IMR-90 (cell line): ENCODE measurements at regions of chr4 and their contacts with region 1.

Region 1: DNA sequence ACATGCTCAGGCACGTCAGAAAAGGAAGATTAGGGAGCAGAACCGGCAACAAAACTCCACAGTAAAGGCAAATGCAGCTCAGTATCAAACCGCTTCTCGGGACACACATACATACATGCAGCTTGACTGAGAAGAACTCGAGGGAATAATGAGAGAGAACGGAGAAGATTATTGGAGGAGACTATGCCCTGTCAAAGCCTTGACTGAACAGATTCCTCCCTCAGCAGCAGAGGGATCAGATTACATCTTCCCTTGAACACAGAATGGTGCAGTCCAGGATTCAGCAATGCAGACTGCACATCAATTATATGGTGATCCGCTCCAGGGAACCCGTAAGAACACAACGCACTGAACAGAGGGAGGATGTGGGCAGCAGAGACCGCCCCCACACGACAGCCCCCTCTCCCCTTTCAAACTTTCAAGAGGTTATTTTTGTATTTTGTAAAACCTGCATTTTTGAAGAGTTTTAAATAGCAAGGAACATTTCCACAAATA is 183.2 kb downstream of the FBXW7 start:
- DNase-seq: peak; percentile 97
- ATAC-seq: peak; percentile 99
- H3K4me3 ChIP-seq: peak overlapping the region; percentile 63
- H3K27ac ChIP-seq: peak overlapping the region; percentile 59; the same call in 1 of the 2 replicates
- H3K4me1 ChIP-seq: 0 out of 2 replicates have a peak, but pooled peaks cover 2% of the 10 kb centered on the region
- H3K27me3 ChIP-seq: no peaks in the 10 kb centered on the region
- CTCF ChIP-seq: no peak
- POLR2A ChIP-seq: peak; percentile 70; the same call in 1 of the 2 replicates
- RAD21 ChIP-seq: 0 out of 2 replicates have a peak, but pooled peaks have one; percentile 4

Region 2: GRCh38 chr4:151129801-151130200 is 1222.9 kb before region 1 on chr4:
- CTCF ChIA-PET with region 1: no interaction called
- POLR2A ChIA-PET with region 1: no interaction called
- dilution Hi-C with region 1: no loop called
- in situ Hi-C with region 1: no loop called
- intact Hi-C with region 1: loop called (anchors 10 kb)
- DNase-seq: peak; percentile 17
- ATAC-seq: no peak
- H3K4me3 ChIP-seq: no peak overlapping the region
- H3K27ac ChIP-seq: no peak overlapping the region
- H3K4me1 ChIP-seq: peaks cover 3% of the 10 kb centered on the region; the same call in 1 of the 2 replicates
- H3K27me3 ChIP-seq: no peaks in the 10 kb centered on the region
- CTCF ChIP-seq: no peak
- POLR2A ChIP-seq: no peak
- RAD21 ChIP-seq: no peak

Region 3: DNA sequence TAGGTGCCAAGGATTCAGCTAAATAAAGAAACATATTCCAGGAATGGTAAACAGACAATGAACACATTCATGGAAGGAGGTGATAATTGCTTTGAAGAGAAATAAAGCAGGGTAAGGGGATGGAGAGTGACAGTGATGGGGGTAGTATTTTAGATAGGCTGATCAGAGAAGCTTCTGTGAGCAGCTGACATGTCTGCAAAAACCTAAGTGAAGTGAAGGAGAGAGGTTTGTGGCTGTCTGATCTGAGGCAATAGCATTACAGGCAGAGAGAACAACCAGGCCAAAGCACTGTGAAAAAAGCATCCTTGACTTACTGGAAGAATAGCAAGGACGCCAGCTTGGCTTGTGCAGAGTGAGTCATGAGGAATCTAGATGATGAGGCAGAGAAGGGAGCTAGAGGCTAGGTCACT is 319.9 kb before region 1 on chr4:
- CTCF ChIA-PET with region 1: no interaction called
- POLR2A ChIA-PET with region 1: no interaction called
- dilution Hi-C with region 1: no loop called
- in situ Hi-C with region 1: no loop called
- intact Hi-C with region 1: loop called (anchors 10 kb)
- DNase-seq: peak; percentile 88
- ATAC-seq: peak; percentile 96
- H3K4me3 ChIP-seq: no peak overlapping the region
- H3K27ac ChIP-seq: no peak overlapping the region
- H3K4me1 ChIP-seq: peaks cover 5% of the 10 kb centered on the region; the same call in 1 of the 2 replicates
- H3K27me3 ChIP-seq: no peaks in the 10 kb centered on the region; the same call in 1 of the 2 replicates
- CTCF ChIP-seq: no peak
- POLR2A ChIP-seq: no peak
- RAD21 ChIP-seq: no peak

Region 4: GRCh38 chr4:152106113-152106763 is 246.4 kb before region 1 on chr4:
- CTCF ChIA-PET with region 1: no interaction called
- POLR2A ChIA-PET with region 1: no interaction called
- dilution Hi-C with region 1: no loop called
- in situ Hi-C with region 1: no loop called
- intact Hi-C with region 1: loop called (anchors 10 kb)
- DNase-seq: peak; percentile 97
- ATAC-seq: peak; percentile 86
- H3K4me3 ChIP-seq: no peak overlapping the region
- H3K27ac ChIP-seq: peak overlapping the region; percentile 33; the same call in 1 of the 2 replicates
- H3K4me1 ChIP-seq: peaks cover 9% of the 10 kb centered on the region
- H3K27me3 ChIP-seq: no peaks in the 10 kb centered on the region
- CTCF ChIP-seq: no peak
- POLR2A ChIP-seq: no peak
- RAD21 ChIP-seq: no peak

Region 5: DNA sequence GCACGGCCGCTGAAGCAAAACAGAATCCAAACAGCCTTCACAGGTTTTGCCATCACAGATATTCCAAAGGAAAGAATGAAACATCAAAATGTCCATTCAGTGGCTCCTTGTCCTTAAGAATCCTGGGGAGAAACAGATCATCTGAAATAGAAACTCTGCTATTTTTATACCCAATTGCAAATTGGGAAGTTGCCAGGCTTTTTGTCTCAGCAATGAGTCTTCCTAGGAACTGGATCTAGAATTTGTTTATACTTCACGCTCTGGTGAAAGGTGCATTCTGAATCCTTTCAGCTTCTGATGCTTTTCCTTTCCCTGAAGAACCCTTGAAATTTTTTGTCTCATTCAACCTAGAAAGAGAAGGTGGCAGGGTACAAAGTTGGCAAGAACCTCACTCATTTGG is 35.7 kb before region 1 on chr4:
- CTCF ChIA-PET with region 1: no interaction called
- POLR2A ChIA-PET with region 1: no interaction called
- dilution Hi-C with region 1: no loop called
- in situ Hi-C with region 1: no loop called
- intact Hi-C with region 1: loop called (anchors 5 kb)
- DNase-seq: peak; percentile 71
- ATAC-seq: peak; percentile 29; the same call in 1 of the 2 replicates
- H3K4me3 ChIP-seq: no peak overlapping the region
- H3K27ac ChIP-seq: no peak overlapping the region
- H3K4me1 ChIP-seq: 0 out of 2 replicates have a peak, but pooled peaks cover 2% of the 10 kb centered on the region
- H3K27me3 ChIP-seq: 0 out of 2 replicates have a peak, but pooled peaks cover 2% of the 10 kb centered on the region
- CTCF ChIP-seq: no peak
- POLR2A ChIP-seq: no peak
- RAD21 ChIP-seq: no peak